IMR-90 (cell line): ENCODE measurements at regions of chr12 and their contacts with region 1.

Region 1: GRCh38 chr12:122793685-122794106 is 19.3 kb downstream of the CCDC62 start:
- DNase-seq: peak; percentile 69
- ATAC-seq: peak; percentile 74
- H3K4me3 ChIP-seq: no peak overlapping the region
- H3K27ac ChIP-seq: no peak overlapping the region
- H3K4me1 ChIP-seq: no peaks in the 10 kb centered on the region
- H3K27me3 ChIP-seq: no peaks in the 10 kb centered on the region
- CTCF ChIP-seq: peak; percentile 71
- POLR2A ChIP-seq: no peak
- RAD21 ChIP-seq: peak; percentile 72

Region 2: GRCh38 chr12:122834104-122834920 is 40.6 kb after region 1 on chr12:
- CTCF ChIA-PET with region 1: interaction called, 3 read pairs
- POLR2A ChIA-PET with region 1: no interaction called
- dilution Hi-C with region 1: no loop called
- in situ Hi-C with region 1: no loop called
- intact Hi-C with region 1: loop called (anchors 2 kb)
- DNase-seq: peak; percentile 44
- ATAC-seq: peak; percentile 52
- H3K4me3 ChIP-seq: peak overlapping the region; percentile 62
- H3K27ac ChIP-seq: peak overlapping the region; percentile 18; the same call in 1 of the 2 replicates
- H3K4me1 ChIP-seq: no peaks in the 10 kb centered on the region; the same call in 1 of the 2 replicates
- H3K27me3 ChIP-seq: peaks cover 2% of the 10 kb centered on the region; the same call in 1 of the 2 replicates
- CTCF ChIP-seq: no peak
- POLR2A ChIP-seq: no peak
- RAD21 ChIP-seq: no peak

Region 3: DNA sequence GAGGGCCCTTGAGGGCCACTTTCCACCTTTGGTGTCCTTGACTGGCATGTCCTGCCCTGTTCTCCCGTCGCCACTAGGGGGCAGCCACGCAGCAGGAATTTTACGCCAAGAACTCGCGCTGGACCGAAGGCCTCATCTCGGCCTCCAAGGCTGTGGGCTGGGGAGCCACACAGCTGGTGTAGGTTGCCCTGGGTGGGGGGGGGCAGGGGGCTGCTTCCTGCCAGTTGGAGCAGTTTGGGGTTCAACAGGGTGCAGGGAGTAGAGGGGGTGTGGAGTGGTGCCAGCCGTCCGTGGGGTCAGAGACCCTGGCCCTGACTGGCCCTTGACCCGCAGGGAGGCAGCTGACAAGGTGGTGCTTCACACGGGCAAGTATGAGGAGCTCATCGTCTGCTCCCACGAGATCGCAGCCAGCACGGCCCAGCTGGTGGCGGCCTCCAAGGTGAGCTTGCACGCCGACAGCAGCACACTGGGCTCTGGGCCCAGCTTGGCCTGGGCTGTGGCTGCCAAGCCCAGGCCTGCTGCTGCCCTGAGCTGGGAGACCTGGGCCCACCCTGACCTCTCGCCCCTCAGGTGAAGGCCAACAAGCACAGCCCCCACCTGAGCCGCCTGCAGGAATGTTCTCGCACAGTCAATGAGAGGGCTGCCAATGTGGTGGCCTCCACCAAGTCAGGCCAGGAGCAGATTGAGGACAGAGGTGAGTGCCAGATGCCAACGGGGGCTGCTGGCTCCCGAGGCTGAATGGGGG is 66.8 kb after region 1 on chr12:
- CTCF ChIA-PET with region 1: interaction called, 5 read pairs
- POLR2A ChIA-PET with region 1: no interaction called
- dilution Hi-C with region 1: no loop called
- in situ Hi-C with region 1: no loop called
- intact Hi-C with region 1: loop called (anchors 5 kb)
- DNase-seq: peak; percentile 75
- ATAC-seq: peak; percentile 77
- H3K4me3 ChIP-seq: no peak overlapping the region
- H3K27ac ChIP-seq: no peak overlapping the region
- H3K4me1 ChIP-seq: peaks cover 3% of the 10 kb centered on the region; the same call in 1 of the 2 replicates
- H3K27me3 ChIP-seq: no peaks in the 10 kb centered on the region
- CTCF ChIP-seq: peak; percentile 91
- POLR2A ChIP-seq: peak; percentile 65
- RAD21 ChIP-seq: peak; percentile 95

Region 4: GRCh38 chr12:122951979-122952892 is 158.5 kb after region 1 on chr12:
- CTCF ChIA-PET with region 1: interaction called, 5 read pairs
- POLR2A ChIA-PET with region 1: no interaction called
- dilution Hi-C with region 1: no loop called
- in situ Hi-C with region 1: loop called (anchors 5 kb)
- intact Hi-C with region 1: loop called (anchors 1 kb)
- DNase-seq: peak; percentile 67
- ATAC-seq: peak; percentile 98
- H3K4me3 ChIP-seq: no peak overlapping the region
- H3K27ac ChIP-seq: no peak overlapping the region
- H3K4me1 ChIP-seq: peaks cover 3% of the 10 kb centered on the region
- H3K27me3 ChIP-seq: no peaks in the 10 kb centered on the region
- CTCF ChIP-seq: peak; percentile 95
- POLR2A ChIP-seq: no peak
- RAD21 ChIP-seq: peak; percentile 95

Region 5: DNA sequence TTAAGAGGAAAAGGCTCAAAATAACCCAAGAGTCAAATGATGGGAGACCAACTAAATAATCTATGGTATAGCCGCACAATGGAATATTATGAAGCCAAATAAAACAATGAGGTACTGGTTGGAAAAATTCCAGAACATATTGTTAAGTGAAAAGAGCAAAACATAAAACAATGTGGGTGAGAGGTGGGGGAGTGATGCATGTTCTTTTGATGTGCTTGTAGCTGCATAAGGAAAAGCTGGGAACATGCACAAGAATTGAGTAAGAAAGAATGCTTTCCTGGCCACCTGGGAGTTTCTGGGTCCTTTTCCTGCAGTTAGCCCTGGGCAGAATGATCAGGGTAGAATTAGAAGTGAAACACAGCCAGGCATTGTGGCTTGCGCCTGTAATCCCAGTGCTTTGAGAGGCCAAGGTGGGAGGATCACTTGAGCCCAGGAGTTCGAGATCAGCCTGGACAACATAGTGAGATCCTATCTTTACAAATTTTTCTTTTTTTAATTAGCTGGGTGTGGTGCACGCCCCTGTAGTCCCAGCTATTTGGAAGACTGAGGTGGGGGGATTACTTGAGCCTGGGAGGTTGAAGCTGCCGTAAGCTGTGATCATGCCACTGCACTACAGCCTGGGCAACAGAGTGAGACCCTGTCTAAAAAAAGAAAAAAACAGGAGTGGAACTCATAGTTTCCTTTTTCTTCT is 164.6 kb after region 1 on chr12:
- CTCF ChIA-PET with region 1: interaction called, 4 read pairs
- POLR2A ChIA-PET with region 1: no interaction called
- dilution Hi-C with region 1: no loop called
- in situ Hi-C with region 1: loop called (anchors 5 kb)
- intact Hi-C with region 1: no loop called
- DNase-seq: no peak
- ATAC-seq: no peak
- H3K4me3 ChIP-seq: no peak overlapping the region
- H3K27ac ChIP-seq: no peak overlapping the region
- H3K4me1 ChIP-seq: no peaks in the 10 kb centered on the region; the same call in 1 of the 2 replicates
- H3K27me3 ChIP-seq: no peaks in the 10 kb centered on the region
- CTCF ChIP-seq: no peak
- POLR2A ChIP-seq: no peak
- RAD21 ChIP-seq: no peak